ENCODE measurements at regions of chr14 and their contacts with region 1.

Region 1: GRCh38 chr14:64147126-64147790 is 146.9 kb downstream of the ESR2 start:
- DNase-seq: no peak
- H3K4me3 ChIP-seq: no peak overlapping the region
- H3K27ac ChIP-seq: no peak overlapping the region
- H3K4me1 ChIP-seq: no peaks in the 10 kb centered on the region
- H3K27me3 ChIP-seq: no peaks in the 10 kb centered on the region
- CTCF ChIP-seq: no peak

Region 2: GRCh38 chr14:64196814-64197411 is 49.7 kb after region 1 on chr14:
- intact Hi-C with region 1: no loop called
- DNase-seq: no peak
- H3K4me3 ChIP-seq: peak overlapping the region; percentile 12
- H3K27ac ChIP-seq: no peak overlapping the region
- H3K4me1 ChIP-seq: no peaks in the 10 kb centered on the region
- H3K27me3 ChIP-seq: no peaks in the 10 kb centered on the region
- CTCF ChIP-seq: no peak

Region 3: DNA sequence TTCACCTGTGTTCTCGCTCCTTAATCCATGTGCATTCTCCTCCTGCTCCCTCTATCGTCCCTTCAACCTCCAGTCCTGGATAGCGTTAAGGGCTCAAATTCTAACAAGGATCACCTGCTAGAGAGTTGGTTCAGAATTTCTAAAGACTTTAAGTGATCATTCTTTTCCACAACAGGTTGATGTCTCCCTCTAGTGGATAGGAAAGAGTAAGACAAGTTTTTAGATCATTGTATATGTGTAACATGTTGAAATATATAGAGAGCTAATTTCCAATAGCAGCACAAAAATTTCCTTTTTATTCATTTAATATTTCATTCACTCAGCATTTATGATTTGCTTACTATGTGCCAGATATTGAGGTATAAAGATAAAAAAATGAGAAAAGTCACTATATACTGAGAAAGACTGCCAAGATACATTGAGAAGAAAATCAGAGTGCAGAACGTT is 156.2 kb after region 1 on chr14:
- intact Hi-C with region 1: loop called (anchors 10 kb)
- DNase-seq: no peak
- H3K4me3 ChIP-seq: no peak overlapping the region
- H3K27ac ChIP-seq: no peak overlapping the region
- H3K4me1 ChIP-seq: no peaks in the 10 kb centered on the region
- H3K27me3 ChIP-seq: no peaks in the 10 kb centered on the region
- CTCF ChIP-seq: peak; percentile 59